Tibial artery (tissue), 4 donors: ENCODE measurements at regions of chr22 and their contacts with region 1.

Region 1: DNA sequence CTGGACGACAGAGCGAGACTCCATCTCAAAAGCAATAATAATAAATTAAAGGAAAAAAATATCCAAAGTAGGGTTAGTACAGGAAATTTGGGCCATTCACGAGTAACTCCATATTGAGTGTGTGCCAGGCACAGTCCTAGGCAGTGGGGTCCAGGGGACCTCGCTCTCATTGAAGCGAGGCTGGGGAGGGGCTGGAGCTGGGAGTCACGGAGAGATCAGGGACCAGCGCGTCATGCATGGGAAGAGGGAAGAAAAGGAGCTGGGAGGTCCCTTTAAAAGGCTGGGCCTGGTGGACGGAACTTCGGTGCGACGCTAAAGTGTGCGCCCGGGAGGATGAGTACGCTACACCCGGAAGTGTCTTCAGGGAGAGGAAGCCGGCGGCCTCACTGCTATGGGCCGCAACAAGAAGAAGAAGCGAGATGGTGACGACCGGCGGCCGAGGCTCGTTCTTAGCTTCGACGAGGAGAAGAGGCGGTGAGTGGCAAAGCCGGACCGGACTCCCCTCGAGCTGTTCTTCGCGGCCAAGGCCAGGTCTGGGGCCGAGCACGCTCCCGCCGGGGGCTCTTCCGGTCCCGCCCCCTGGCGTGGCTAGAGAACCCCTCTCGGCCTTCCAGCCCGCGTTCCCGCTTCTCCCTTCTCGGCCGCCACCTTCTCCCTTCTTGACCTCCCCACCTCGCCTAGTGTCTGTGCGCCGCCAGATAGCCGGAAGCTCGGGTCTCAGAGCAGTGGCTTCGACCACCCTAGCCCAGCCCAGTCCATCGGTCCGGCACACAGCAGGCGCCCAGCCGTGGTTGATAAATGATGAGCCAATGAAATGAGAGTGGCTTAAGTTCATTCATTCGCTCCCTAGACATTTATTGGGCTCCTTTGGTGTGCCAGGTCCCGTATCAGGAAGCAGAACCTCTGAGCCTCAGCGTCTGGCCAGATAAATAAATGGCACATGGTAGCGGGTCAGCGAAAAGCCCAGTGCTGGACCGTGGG is at the start of gene NOL12:
- DNase-seq: peak; percentile 74 to 88
- H3K4me3 ChIP-seq: peak within 1 kb of the TSS; percentile 73 to 88
- H3K27ac ChIP-seq: peak within 1 kb of the TSS; percentile 82 to 87
- H3K4me1 ChIP-seq: peaks cover 0 to 24% (median 14%) of the 10 kb centered on the region in 4 donors
- H3K27me3 ChIP-seq: no peaks in the 10 kb centered on the region
- CTCF ChIP-seq: no peak

Region 2: DNA sequence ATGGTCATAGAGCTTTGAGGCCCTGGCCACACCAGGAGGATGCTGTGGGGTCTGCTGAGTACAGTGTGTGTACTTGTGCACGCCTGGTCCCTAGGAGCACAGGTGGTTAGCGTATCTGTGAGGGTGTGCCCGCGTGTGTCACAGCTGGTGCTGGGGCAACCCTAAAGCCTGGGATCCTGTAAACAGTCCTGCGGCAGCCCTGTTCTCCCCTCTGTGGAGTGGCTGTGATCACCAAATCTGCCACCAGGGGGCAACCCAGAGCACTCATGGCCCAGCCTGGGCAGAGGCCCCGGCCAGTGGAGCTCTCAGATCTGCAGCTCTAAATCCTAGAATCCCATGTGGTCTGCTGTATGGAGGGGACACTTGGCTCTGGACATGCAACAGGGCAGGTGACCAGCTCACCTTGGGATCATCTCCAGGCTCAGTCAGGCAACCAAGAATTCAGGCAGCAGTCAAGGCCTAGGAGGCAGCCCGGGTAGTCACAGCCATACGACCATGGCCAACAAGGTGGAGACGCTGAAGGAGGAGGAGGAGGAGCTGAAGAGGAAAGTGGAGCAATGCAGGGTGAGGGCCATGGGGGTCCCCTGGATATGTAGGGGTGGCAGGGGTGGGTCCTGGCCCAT is 43.0 kb before region 1 on chr22:
- intact Hi-C with region 1: loop called (anchors 5 kb)
- DNase-seq: peak; percentile 85 to 87
- H3K4me3 ChIP-seq: no peak overlapping the region
- H3K27ac ChIP-seq: no peak overlapping the region
- H3K4me1 ChIP-seq: peaks cover 0 to 37% (median 12%) of the 10 kb centered on the region in 4 donors
- H3K27me3 ChIP-seq: peaks cover 0 to 34% of the 10 kb centered on the region in 2 donors
- CTCF ChIP-seq: peak; percentile 91 to 93

Region 3: DNA sequence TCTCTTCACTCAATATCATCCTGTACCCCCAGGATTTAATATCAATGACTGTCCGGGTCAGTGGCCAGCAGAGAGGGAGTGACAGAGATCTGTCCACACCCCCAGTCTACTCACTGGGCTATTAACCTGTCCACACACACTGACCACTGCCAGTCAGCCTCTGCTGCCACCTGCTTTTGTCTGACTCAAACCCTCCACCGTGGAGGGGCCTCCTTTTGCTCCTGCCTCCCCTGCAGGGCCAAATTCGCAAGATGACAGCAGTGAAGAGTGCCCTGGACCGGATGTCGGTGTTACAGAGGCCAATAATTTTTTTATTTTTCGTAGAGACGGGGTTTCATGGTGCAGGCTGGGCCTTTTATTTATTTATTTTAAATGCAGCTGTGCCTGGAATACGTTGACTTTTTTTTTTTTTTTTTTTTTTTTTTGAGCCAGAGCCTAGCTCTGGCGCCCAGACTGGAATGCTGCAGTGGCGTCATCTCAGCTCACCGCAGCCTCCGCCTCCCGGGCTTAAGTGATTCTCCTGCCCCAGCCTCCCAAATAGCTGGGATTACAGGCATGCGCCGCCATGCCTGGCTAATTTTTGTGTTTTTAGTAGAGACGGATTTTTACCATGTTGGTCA is 22.7 kb before region 1 on chr22:
- intact Hi-C with region 1: loop called (anchors 2 kb)
- DNase-seq: no peak
- H3K4me3 ChIP-seq: no peak overlapping the region
- H3K27ac ChIP-seq: no peak overlapping the region
- H3K4me1 ChIP-seq: peaks cover 0 to 34% (median 22%) of the 10 kb centered on the region in 4 donors
- H3K27me3 ChIP-seq: no peaks in the 10 kb centered on the region
- CTCF ChIP-seq: no peak

Region 4: DNA sequence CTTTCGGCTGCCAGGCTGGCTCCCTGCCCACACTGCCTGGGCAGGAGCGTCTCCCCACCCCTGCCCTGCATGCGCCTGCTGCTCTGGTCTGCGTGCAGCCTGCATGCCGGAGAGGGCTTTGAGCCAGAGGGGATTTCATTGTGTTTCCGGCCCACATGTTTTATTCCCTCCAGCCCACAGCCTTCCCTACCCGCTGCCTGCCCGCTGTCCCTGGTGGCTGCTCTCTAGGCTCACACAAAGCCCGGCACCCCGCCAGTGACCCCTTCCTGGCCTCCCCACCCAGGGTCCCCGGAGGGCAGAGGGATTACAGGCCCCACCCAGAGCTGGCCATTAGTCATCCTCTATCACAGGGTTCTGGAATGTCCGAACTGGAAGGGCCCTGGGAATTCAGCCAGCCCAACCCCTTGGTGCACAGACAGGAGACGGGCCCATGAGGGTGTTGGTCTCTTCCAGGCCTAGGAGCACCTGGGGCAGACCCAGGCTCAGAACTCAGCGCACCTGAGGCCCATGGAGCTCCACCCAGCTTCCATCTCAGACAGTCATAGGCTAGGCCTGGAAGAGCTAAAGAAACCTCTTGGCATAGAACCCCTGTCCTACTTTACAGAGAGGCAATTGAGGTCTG is 66.3 kb after region 1 on chr22:
- intact Hi-C with region 1: loop called (anchors 10 kb)
- DNase-seq: peak; percentile 91 to 96
- H3K4me3 ChIP-seq: peak overlapping the region in 1 of 2 donors; percentile 5
- H3K27ac ChIP-seq: peak overlapping the region; percentile 76 to 87
- H3K4me1 ChIP-seq: peaks cover 15 to 68% (median 57%) of the 10 kb centered on the region in 4 donors
- H3K27me3 ChIP-seq: no peaks in the 10 kb centered on the region
- CTCF ChIP-seq: peak; percentile 14 to 30